ENCODE measurements at regions of chr1 and their contacts with region 1.

Region 1: DNA sequence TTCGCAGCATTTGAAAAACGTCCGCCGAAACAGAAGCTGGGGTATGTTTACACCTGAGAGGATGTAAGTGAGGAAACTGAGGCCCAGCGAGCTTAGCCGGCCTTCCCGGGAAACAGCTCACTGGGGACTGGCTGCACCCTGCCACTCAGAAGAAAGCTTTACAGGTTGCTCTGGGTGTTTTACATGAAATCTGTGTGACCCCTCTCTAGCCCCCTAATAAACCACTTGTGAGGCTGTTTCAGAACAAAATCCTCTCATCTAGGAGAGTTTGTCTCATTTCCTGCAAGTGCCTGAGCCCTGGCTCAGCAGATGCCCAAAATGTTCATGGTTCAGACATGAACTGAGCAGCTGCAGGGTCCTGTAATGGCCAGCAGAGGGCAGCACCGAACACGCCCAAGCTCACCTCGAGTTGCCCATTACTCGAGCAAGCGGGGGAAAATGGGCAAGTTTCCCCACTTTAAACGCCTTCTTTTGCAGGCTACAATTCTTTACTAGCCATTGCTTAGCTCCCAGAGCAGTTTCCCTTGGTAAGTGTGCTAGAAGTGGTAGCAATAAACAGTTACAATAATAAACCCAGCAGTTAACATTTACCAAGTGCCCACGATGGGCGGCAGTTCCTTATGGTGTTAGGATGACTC is 76.4 kb downstream of the FHAD1 start:
- DNase-seq: peak; percentile 80 to 88 (median 84)
- H3K4me3 ChIP-seq: no peak overlapping the region
- H3K27ac ChIP-seq: no peak overlapping the region
- H3K4me1 ChIP-seq: peaks cover 0 to 19% (median 17%) of the 10 kb centered on the region in 4 experiments
- H3K27me3 ChIP-seq: no peaks in the 10 kb centered on the region

Region 2: GRCh38 chr1:15288173-15288926 is 35.1 kb before region 1 on chr1:
- CTCF ChIA-PET with region 1: no interaction called
- POLR2A ChIA-PET with region 1: no interaction called
- DNase-seq: no peak
- H3K4me3 ChIP-seq: no peak overlapping the region
- H3K27ac ChIP-seq: no peak overlapping the region
- H3K4me1 ChIP-seq: no peaks in the 10 kb centered on the region
- H3K27me3 ChIP-seq: no peaks in the 10 kb centered on the region

Region 3: DNA sequence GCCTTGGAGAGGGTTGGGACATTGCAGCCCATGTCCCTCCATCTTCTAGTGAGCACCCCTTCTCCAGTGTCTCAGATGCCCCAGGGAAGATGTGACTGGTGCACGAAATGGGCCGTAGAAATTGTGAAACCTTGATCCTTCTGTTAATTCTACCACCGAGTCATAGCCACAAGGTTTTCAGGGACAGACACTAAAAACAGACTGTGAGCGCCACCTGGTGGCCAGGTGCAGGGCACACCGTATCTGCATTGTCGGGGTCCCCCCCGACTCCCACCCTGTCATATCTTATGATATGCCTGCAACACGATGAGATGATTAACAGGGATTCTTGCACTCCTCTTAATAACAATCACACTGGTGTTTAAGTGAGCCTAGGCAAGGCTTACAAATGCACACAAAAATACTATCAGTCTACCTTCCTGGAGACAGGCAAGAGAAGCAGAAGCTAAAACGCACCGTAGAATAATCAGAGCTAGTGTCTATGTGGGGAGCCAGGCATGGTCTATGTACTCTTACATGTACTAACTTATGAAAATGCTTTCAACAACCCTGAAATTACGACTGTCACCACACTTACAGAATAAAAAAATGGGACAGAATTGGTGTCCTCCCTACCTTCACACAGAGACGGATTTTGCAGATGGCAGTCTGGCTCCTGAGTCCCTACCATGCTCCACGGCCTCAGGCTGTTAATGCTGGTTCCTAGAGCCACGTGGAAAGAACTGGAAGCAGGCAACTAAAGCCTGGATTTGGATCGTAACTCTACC is 18.6 kb before region 1 on chr1:
- CTCF ChIA-PET with region 1: interaction called, 13 read pairs
- POLR2A ChIA-PET with region 1: no interaction called
- DNase-seq: peak; percentile 60 to 72 (median 68)
- H3K4me3 ChIP-seq: no peak overlapping the region
- H3K27ac ChIP-seq: no peak overlapping the region
- H3K4me1 ChIP-seq: peaks cover 0 to 5% (median 1%) of the 10 kb centered on the region in 4 experiments
- H3K27me3 ChIP-seq: no peaks in the 10 kb centered on the region

Region 4: DNA sequence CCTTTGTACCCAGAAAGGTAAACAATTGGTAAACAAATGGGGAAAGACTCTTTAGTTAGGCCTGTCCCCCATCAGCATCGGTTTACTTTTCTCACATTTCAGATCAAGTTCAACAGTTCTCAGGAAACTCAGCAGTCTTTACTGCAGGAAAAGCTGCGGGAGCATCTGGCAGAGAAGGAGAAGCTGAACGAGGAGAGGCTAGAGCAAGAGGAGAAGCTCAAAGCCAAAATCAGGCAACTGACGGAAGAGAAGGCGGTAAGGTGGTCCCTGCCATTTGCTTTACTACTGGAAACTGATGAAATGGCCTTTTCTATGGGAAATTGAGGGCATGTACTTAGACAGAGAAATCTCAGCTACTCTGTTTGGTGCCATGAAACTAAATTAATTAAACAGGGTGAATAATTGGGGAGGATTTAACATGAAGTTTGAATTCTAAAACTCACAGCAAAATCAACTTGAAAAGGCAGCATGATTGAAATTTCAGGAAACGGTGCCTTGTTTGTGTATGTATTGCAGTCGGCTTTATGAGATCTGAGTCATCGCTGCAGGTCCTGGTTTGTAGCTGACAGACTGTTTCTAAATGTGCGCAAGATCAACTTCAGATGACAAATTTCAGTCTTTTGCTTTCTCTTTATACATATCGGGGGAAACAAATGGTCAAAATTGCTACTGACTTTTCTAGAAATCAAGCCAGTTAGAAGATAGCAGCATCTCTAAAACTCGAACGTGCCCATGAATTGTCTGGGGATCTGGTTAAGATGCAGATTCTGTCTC is 18.4 kb after region 1 on chr1:
- CTCF ChIA-PET with region 1: interaction called, 17 read pairs
- POLR2A ChIA-PET with region 1: no interaction called
- DNase-seq: peak in 2 of 3 donors; percentile 81 to 86
- H3K4me3 ChIP-seq: no peak overlapping the region
- H3K27ac ChIP-seq: no peak overlapping the region
- H3K4me1 ChIP-seq: peaks cover 15 to 44% (median 39%) of the 10 kb centered on the region in 4 experiments
- H3K27me3 ChIP-seq: no peaks in the 10 kb centered on the region

Region 5: GRCh38 chr1:15417365-15417934 is 94.0 kb after region 1 on chr1:
- CTCF ChIA-PET with region 1: interaction called, 28 read pairs
- POLR2A ChIA-PET with region 1: no interaction called
- DNase-seq: peak; percentile 87 to 96 (median 95)
- H3K4me3 ChIP-seq: peak overlapping the region in 5 of 7 experiments; percentile 10 to 61 (median 26)
- H3K27ac ChIP-seq: peak overlapping the region in 1 of 2 experiments; percentile 58
- H3K4me1 ChIP-seq: peaks cover 9 to 59% (median 50%) of the 10 kb centered on the region in 4 experiments
- H3K27me3 ChIP-seq: no peaks in the 10 kb centered on the region

Region 6: GRCh38 chr1:15430787-15431570 is 107.5 kb after region 1 on chr1:
- CTCF ChIA-PET with region 1: interaction called, 92 read pairs
- POLR2A ChIA-PET with region 1: interaction called, 4 read pairs
- DNase-seq: peak in 2 of 3 donors; percentile 61 to 69
- H3K4me3 ChIP-seq: no peak overlapping the region
- H3K27ac ChIP-seq: no peak overlapping the region
- H3K4me1 ChIP-seq: peaks cover 0 to 6% (median under 1%) of the 10 kb centered on the region in 4 experiments
- H3K27me3 ChIP-seq: no peaks in the 10 kb centered on the region

Region 7: DNA sequence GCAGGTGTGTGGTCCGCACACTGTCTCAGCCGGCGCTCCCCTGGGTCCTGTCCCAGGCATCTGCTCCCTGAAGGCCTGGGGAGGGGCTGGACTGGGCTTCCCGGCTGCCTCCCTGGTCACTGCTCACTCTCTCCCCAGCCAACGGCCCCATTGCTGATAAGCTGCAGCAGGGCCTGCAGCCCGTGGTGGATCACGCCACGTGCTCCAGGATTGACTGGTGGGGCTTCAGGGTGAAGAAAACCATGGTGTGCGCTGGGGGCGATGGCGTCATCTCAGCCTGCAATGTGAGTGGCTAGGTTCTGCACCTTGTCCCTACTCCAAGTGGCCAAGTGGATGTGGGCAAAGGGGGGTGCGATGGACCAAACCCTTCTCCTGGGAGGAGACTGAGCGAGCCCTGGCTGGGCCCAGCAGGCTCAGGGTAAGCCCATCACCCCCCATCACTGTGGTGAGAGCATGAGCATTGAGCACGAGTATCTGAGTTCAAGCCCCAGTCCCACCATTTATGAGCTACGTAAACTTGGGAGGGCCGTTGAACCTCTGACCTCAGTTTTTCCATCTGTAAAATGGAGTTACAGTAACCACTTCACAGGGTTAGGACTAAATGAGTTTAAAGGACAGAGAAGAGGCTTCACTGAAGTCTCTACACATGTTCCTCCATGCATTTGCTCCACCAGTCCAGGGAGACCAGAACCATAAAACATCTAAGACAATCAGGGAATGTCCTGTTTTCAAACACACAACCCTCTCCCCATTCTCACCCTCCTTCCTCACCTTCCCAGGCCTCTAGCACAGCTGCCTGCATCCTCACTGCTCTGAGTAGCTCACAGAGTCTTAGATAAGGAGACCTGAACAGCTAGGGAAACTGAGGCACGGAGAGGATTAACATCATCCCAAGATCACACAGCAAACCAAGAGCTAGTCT is 121.3 kb after region 1 on chr1:
- CTCF ChIA-PET with region 1: interaction called, 14 read pairs
- POLR2A ChIA-PET with region 1: no interaction called
- DNase-seq: no peak
- H3K4me3 ChIP-seq: no peak overlapping the region
- H3K27ac ChIP-seq: no peak overlapping the region
- H3K4me1 ChIP-seq: peaks cover 0 to 11% (median 3%) of the 10 kb centered on the region in 4 experiments
- H3K27me3 ChIP-seq: peaks cover 0 to 7% (median 0%) of the 10 kb centered on the region in 5 experiments

Measured in common myeloid progenitor, CD34-positive (primary cell).